ENCODE measurements at regions of chr12 and their contacts with region 1.

Region 1: GRCh38 chr12:39619660-39620433 is at the start of gene ABCD2:
- DNase-seq: peak; percentile 46
- ATAC-seq: peak; percentile 86
- H3K4me3 Mint-ChIP-seq: no peak within 1 kb of the TSS
- H3K27ac Mint-ChIP-seq: no peak within 1 kb of the TSS
- H3K4me1 Mint-ChIP-seq: peaks cover 23% of the 10 kb centered on the region
- H3K27me3 Mint-ChIP-seq: no peaks in the 10 kb centered on the region
- CTCF ChIP-seq: no peak
- total RNA-seq, gene ABCD2: 1.4 and 1.8 TPM in 2 replicates

Region 2: DNA sequence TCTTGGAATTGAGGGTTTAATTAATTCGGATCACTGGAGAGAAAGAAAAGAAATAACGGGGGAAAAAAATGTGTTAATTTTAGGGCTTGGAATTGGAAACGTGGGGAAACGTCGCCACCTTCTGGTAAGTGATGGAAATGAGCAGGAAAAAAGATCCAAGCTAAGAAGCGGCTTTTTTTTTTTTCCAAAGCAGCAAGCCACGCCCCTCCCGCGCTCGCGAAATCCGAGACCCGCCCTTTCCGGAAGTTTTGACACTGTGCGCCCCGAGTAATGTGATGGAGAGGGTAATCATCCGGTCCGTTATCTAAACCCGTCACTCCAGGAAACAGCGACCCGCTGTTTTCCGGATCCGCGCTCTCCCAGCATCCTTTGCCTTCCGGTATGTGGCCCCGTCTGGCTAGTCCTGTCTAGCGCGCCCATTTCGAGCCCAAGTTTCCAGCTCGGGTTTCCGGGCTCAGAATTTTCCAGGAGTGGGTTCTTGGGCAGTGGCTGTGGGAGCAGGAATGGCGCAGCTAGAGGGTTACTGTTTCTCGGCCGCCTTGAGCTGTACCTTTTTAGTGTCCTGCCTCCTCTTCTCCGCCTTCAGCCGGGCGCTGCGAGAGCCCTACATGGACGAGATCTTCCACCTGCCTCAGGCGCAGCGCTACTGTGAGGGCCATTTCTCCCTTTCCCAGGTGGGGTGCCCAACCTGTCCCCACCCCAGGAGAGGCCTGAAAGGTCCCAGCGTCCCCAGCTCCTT is 1303.3 kb before region 1 on chr12 and contains the start of gene ALG10B:
- CTCF ChIA-PET with region 1: no interaction called
- POLR2A ChIA-PET with region 1: interaction called, 4 read pairs
- intact Hi-C with region 1: loop called (anchors 1 kb)
- DNase-seq: peak; percentile 85
- ATAC-seq: peak; percentile 97
- H3K4me3 Mint-ChIP-seq: peak within 1 kb of the TSS; percentile 92
- H3K27ac Mint-ChIP-seq: peak within 1 kb of the TSS; percentile 87
- H3K4me1 Mint-ChIP-seq: peaks cover 15% of the 10 kb centered on the region
- H3K27me3 Mint-ChIP-seq: no peaks in the 10 kb centered on the region
- CTCF ChIP-seq: no peak
- total RNA-seq, gene ALG10B: 9.3 and 9.8 TPM in 2 replicates

Region 3: DNA sequence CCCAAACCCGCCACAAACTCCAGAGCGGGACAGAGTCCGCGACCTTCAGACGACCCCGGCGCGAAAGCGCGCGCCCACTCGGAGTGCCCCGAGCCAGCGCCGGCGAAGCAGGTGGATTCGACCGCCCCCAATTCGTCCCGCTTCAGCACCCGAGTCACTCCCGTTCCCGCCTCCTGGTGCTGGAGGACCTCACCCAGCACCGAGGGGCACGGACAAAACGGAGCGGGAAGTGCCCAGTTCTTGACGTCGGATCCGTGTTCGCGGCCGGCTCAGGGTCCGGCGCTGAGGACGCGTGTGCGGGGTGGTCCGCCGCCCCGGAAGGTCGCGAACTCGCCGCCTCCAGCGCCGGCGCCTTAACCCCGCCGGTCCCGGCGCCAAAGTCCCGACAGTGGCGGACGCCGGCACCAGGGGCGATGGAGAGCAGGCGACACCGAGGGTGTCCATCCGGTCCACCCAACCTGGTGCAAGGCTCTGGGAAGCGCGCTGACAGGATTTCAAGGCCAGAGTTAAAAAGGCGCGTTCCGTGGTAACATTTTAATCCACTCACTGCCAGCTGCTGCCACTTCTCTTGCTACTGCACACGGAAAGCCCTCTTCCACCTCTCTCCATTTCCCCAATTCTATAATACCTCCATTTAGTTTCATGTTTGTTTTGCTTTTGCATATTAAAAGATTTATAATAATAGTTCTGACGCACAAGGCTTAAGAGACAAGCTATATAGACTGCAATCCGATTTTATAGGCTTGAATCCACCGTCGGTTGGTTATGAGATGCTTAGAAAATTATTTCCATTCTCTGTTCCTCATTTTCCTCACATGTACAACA is 474.5 kb before region 1 on chr12:
- CTCF ChIA-PET with region 1: no interaction called
- POLR2A ChIA-PET with region 1: no interaction called
- intact Hi-C with region 1: no loop called
- DNase-seq: no peak
- ATAC-seq: no peak
- H3K4me3 Mint-ChIP-seq: no peak overlapping the region
- H3K27ac Mint-ChIP-seq: no peak overlapping the region
- H3K4me1 Mint-ChIP-seq: no peaks in the 10 kb centered on the region
- H3K27me3 Mint-ChIP-seq: peaks cover 16% of the 10 kb centered on the region
- CTCF ChIP-seq: no peak

Region 4: DNA sequence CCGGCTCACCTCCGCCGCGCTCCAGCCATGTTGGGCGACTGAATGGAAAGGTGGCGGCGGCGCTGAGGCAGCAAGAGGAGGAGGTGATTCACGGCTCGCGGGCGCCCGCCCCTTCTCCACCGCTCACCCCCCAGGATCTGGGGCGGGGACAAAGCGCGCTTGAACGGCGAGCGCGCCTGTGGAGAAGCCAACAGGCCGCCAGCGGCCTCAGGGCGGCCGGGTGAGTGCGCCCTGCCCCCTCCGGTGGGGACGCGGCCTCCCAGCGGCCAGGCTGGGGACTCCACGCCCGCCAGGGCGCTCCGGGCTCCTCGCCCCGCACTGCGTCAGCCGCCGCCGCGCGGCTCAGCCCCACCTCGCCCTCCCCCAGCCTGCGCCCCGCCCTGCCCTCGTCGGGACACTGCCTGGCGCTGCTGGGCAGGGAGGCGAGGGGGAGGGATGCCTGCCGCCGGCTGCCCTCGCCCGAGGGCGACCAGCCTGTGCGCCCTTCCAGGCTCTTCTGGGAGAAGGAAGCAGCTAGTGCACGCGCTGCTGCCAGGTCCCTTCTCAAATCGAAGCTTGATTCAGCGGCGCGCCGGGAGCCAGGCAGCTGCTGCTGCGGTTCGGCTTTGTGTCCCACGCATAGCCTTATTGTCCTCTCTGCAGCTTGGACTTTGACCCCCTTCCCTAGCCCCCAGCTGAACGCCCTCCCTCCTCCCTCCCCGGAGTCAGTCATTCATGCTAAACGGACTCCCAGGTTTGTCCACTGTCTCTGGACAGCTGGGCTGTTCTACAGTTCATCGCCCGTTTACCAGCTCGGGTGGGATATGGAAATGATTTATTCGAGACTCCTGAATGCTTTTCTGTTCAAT is 176.5 kb before region 1 on chr12 and contains the start of gene KIF21A:
- CTCF ChIA-PET with region 1: no interaction called
- POLR2A ChIA-PET with region 1: no interaction called
- intact Hi-C with region 1: loop called (anchors 2 kb)
- DNase-seq: peak; percentile 65
- ATAC-seq: peak; percentile 91
- H3K4me3 Mint-ChIP-seq: peak within 1 kb of the TSS; percentile 82
- H3K27ac Mint-ChIP-seq: peak within 1 kb of the TSS; percentile 61
- H3K4me1 Mint-ChIP-seq: peaks cover 16% of the 10 kb centered on the region
- H3K27me3 Mint-ChIP-seq: peaks cover 31% of the 10 kb centered on the region
- CTCF ChIP-seq: no peak
- total RNA-seq, gene KIF21A: 6.1 and 7.6 TPM in 2 replicates

Region 5: DNA sequence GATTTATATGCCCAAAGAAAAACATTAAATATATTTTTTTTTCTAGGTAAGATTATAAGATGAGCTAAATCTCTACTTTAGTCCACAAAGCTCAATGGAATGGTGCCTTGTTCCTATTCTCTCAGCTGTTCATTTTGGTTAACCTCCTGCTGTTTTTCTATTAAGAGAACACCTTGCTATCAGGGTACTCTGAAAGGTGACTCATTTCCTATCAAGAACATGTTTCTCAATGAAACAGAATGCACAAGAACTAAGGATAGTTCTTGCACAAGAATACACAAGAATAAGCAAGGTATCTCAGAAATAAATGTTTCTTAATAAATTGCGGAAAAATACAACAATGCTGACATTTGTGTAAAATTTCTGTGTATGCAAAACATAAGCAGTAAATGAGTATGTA is 14.3 kb before region 1 on chr12:
- CTCF ChIA-PET with region 1: no interaction called
- POLR2A ChIA-PET with region 1: interaction called, 3 read pairs
- intact Hi-C with region 1: loop called (anchors 1 kb)
- DNase-seq: no peak
- ATAC-seq: no peak
- H3K4me3 Mint-ChIP-seq: no peak overlapping the region
- H3K27ac Mint-ChIP-seq: no peak overlapping the region
- H3K4me1 Mint-ChIP-seq: no peaks in the 10 kb centered on the region
- H3K27me3 Mint-ChIP-seq: no peaks in the 10 kb centered on the region
- CTCF ChIP-seq: no peak

Region 6: DNA sequence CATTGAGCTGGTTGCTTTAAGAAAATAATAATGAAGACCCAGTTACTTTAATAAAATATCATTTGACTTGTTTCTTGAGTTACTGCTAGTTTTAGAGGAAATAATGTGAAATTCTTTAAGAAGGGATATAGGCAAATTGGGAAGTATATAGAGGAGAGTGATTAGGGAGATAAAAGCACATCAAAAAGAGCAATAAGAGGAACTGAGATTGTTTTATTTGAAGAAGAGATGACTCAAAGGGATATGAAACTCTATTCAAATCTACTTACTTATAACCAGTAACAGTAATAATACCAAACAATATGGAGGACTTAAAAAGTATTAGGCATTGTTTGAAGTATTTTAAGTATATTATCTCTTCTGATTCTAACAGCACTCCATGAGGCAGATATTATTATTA is 642.1 kb after region 1 on chr12:
- CTCF ChIA-PET with region 1: no interaction called
- POLR2A ChIA-PET with region 1: no interaction called
- intact Hi-C with region 1: loop called (anchors 1 kb)
- DNase-seq: no peak
- ATAC-seq: peak; percentile 73
- H3K4me3 Mint-ChIP-seq: peak overlapping the region; percentile 75
- H3K27ac Mint-ChIP-seq: peak overlapping the region; percentile 92
- H3K4me1 Mint-ChIP-seq: peaks cover 41% of the 10 kb centered on the region
- H3K27me3 Mint-ChIP-seq: no peaks in the 10 kb centered on the region
- CTCF ChIP-seq: no peak